ENCODE measurements at regions of chr4 and their contacts with region 1.

Region 1: DNA sequence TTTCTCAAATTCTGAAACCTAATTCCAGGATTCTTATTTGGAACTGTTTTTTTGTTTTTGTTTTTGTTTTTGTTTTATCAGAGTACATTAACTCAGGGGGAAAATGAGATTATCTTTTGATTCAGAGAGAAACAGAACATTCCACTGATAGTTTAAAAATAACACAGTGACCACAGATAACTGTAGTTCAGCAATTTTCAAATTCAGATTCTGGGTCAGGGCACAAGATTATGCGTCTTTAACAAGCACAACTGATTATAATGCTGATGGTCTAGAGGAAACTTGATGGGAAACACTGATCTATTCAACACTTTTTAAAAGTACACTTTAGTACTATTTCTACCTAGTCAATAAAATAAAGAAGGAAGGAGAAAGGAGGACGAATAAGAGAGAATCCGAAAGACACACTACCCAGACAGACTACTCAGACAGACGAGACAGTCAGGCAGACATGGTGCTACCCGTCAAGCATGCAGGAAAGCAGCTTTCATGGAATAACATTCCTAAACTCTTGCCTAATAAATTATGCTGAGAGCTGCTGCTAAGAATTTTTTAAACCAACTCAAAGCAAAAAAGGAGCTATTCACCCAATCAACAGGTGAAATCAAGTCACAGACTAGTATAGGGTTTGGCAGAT is 59.0 kb downstream of the APBB2 start:
- DNase-seq: no peak
- ATAC-seq: peak in 2 of 4 donors; percentile 67
- H3K4me3 ChIP-seq: peak overlapping the region; percentile 1
- H3K27ac ChIP-seq: peak overlapping the region; percentile 13
- H3K4me1 ChIP-seq: peaks cover 6% of the 10 kb centered on the region
- H3K27me3 ChIP-seq: no peaks in the 10 kb centered on the region
- CTCF ChIP-seq: no peak

Region 2: DNA sequence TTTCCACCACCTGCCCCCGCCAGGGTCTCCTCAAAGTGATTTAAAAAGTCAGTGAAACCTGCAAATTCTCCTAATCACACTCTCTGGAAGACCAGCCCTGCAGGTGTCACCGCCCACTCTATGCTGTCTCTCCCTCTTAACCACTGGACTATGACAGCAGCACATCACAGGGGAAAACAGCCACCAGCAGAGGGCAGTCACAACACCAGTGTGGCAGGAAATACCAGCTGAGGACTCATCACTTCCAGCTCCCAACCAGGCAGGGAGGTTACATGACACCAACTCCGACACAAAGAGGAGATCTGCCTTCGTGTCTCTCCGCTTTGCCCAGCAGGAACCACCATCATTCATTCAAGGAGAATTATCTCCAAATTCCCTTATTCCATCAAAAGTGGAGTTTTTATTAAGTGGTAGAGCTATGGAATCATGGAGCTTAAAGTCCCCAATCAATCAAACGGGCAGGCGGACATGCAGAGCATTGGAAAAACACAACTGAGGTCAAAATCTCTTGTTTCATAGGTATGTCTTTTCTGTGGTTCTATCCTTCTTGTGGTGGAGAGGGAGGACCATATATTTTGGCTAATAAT is 314.2 kb before region 1 on chr4:
- intact Hi-C with region 1: no loop called
- DNase-seq: peak; percentile 76 to 85
- ATAC-seq: peak; percentile 72 to 80 (median 78)
- H3K4me3 ChIP-seq: no peak overlapping the region
- H3K27ac ChIP-seq: peak overlapping the region; percentile 87
- H3K4me1 ChIP-seq: peaks cover 23% of the 10 kb centered on the region
- H3K27me3 ChIP-seq: no peaks in the 10 kb centered on the region
- CTCF ChIP-seq: peak; percentile 71

Region 3: DNA sequence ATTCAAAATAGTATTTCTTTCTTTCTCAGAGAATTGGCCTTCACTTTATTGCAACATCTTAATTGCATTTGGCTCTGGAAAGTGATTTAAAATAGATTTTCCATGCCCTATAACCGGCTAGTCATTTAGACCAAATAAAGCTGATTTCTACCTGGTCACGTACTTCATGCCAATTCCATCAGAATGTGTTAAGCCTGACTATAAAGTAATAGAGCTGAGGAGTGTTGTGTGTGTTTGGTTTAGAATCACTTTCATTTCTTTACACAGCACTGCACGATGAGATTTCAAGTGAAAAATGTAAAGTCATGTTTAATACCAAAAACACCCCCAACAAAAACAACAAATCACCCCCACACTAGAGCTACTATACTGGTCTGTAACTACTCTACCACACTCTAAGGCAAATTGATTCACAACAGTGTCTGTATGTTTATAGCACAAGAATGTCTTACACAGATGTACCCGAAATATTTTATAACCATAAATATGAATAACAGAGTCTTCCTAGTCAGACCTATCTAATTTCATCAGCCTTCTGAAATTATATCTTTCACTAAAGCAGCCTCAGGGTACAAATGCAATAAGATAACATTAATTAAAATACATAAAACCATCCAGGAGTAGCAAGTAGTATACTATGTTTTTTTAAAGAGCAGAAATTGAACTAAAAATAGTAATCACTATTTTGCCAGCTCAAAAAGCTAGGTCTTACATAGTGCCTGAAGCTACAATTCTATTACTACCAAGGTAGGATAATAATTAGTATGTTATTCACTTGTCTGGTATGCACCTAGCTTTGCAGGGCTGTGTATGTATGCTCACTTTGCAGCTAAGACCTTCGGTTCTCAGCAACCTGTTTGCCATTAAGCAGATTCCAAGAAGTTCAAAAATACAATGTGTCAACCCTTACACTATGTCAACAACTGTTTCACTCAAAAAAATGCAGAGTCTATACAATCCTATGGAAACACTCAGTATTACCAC is 30.6 kb after region 1 on chr4:
- intact Hi-C with region 1: no loop called
- DNase-seq: no peak
- ATAC-seq: peak in 1 of 4 donors; percentile 72
- H3K4me3 ChIP-seq: peak overlapping the region; percentile 3
- H3K27ac ChIP-seq: no peak overlapping the region
- H3K4me1 ChIP-seq: peaks cover 18% of the 10 kb centered on the region
- H3K27me3 ChIP-seq: no peaks in the 10 kb centered on the region
- CTCF ChIP-seq: no peak

Region 4: DNA sequence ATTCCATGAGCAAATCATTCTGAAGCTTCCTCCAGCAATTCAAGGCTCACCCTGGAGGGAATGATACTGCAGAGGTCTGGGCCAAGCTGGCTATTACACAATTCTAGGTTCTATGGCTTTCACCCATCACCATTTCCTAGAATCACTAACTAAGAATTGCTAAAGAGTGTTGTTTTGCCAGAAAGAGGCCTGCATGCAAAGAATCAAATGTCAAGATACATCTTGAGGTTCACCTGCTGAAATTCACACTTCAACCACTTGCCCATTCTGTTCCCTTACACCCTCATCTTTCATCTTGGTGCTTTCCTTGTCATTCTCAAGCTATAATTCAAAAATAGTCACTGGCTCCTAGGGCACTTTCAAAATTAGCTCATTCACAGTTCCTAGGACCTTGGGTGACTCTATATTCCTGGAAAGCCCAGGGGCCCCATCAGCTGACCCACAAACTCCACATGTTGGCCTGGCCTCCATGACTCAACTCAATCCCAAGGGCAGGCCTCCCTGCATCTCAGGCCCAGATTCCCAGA is 52.1 kb after region 1 on chr4:
- intact Hi-C with region 1: loop called in 1 of 2 experiments (anchors 5 kb)
- DNase-seq: peak; percentile 59 to 64
- ATAC-seq: peak in 3 of 4 donors; percentile 69 to 73 (median 70)
- H3K4me3 ChIP-seq: no peak overlapping the region
- H3K27ac ChIP-seq: no peak overlapping the region
- H3K4me1 ChIP-seq: peaks cover 22% of the 10 kb centered on the region
- H3K27me3 ChIP-seq: peaks cover 0 to 11% (median 0%) of the 10 kb centered on the region in 3 donors
- CTCF ChIP-seq: no peak